ENCODE measurements at regions of chr7 and their contacts with region 1.

Region 1: GRCh38 chr7:5743803-5744202 is 37.7 kb downstream of the RNF216 start:
- DNase-seq: no peak
- H3K4me3 ChIP-seq: no peak overlapping the region
- H3K4me3 Mint-ChIP-seq: no peak overlapping the region
- H3K27ac ChIP-seq: no peak overlapping the region
- H3K27ac Mint-ChIP-seq: no peak overlapping the region
- H3K4me1 ChIP-seq: no peaks in the 10 kb centered on the region
- H3K4me1 Mint-ChIP-seq: peaks cover 14 to 37% (median 33%) of the 10 kb centered on the region in 3 donors
- H3K27me3 ChIP-seq: no peaks in the 10 kb centered on the region
- H3K27me3 Mint-ChIP-seq: no peaks in the 10 kb centered on the region

Region 2: DNA sequence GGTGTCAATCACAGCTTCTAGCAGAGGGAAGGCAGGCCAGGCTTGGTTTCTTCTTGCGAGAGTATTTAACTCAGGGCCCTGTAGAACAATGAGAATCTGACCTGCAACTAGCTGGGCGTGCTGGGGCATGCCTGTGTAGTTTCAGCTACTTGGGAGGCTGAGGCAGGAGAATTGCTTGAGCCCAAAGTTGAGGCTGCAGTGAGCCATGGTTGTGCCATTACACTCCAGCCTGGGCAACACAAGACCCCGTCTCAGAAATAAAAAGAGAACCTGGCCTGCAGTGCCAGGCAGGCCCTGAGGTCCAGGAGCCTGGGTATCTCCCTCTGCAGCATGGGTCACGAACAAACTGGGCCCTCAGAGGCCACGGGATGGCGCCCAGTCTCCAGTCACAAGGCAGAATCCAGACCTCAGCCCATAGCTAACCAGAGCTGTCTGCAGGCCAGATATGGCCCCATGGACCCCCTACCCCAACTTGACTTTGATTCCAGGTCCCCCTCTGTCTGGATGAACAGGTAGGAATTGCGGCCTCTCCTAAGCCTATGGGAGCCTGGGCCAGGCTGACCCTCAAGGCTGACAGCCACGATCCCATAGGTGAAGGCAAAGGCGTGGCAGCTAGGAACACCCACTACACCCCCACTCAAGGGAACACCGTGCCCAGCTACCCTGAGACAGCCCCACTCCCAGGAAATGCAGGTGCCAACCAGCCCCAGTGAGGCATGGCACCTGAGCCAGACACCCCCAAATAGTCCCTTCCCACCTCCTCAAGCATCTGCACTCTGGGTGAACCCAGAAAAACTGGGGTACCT is 217.5 kb before region 1 on chr7:
- CTCF ChIA-PET with region 1: no interaction called
- POLR2A ChIA-PET with region 1: interaction called, 10 read pairs
- DNase-seq: peak in 3 of 5 donors; percentile 18 to 57 (median 37)
- H3K4me3 ChIP-seq: no peak overlapping the region
- H3K4me3 Mint-ChIP-seq: peak overlapping the region; percentile 97 to 100 (median 99)
- H3K27ac ChIP-seq: no peak overlapping the region
- H3K27ac Mint-ChIP-seq: peak overlapping the region; percentile 85 to 98 (median 94)
- H3K4me1 ChIP-seq: peaks cover 29% of the 10 kb centered on the region
- H3K4me1 Mint-ChIP-seq: peaks cover 37 to 56% (median 46%) of the 10 kb centered on the region in 3 donors
- H3K27me3 ChIP-seq: no peaks in the 10 kb centered on the region
- H3K27me3 Mint-ChIP-seq: peaks cover 0 to 27% of the 10 kb centered on the region in 2 donors

Region 3: DNA sequence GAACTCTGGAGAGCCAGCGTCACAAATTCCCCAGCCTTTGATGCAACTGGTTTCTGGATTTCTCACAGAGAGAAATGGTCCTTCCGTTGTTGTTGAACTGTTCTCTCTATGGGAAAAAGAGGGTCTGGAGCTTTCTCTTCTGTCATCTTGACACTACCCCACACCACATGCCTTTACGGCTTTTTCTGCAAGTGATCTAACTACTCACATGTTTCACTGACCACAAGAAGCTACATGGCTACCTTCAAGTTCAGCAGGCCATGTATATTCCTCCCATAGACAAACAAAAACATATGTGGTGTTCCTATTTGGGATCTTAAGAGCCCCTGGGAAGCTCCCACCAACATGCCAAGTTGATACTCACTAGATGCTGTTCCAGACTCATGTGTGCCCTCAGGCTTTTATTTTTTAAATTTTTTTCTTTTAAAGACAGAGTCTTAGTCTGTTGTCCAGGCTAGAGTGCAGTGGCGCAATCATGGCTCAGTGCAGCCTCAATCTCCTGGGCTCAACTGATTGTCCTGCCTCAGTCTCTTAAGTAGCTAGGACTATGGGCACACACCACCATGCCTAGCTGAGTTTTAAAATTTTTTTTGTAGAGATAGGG is 34.4 kb before region 1 on chr7:
- CTCF ChIA-PET with region 1: no interaction called
- POLR2A ChIA-PET with region 1: no interaction called
- DNase-seq: no peak
- H3K4me3 ChIP-seq: no peak overlapping the region
- H3K4me3 Mint-ChIP-seq: no peak overlapping the region
- H3K27ac ChIP-seq: no peak overlapping the region
- H3K27ac Mint-ChIP-seq: peak overlapping the region in 2 of 8 donors; percentile 17 to 71
- H3K4me1 ChIP-seq: peaks cover 3% of the 10 kb centered on the region
- H3K4me1 Mint-ChIP-seq: peaks cover 3 to 6% (median 4%) of the 10 kb centered on the region in 3 donors
- H3K27me3 ChIP-seq: no peaks in the 10 kb centered on the region
- H3K27me3 Mint-ChIP-seq: no peaks in the 10 kb centered on the region

Measured in CD8-positive, alpha-beta memory T cell (primary cell).